CD4-positive, alpha-beta T cell (primary cell): ENCODE measurements at regions of chr3 and their contacts with region 1.

Region 1: GRCh38 chr3:140863580-140864009 is 78.0 kb upstream of the SLC25A36 start:
- DNase-seq: peak in 9 of 14 experiments; percentile 2 to 58 (median 7)
- ATAC-seq: no peak
- H3K4me3 ChIP-seq: no peak overlapping the region
- H3K4me3 Mint-ChIP-seq: no peak overlapping the region
- H3K27ac ChIP-seq: no peak overlapping the region
- H3K27ac Mint-ChIP-seq: no peak overlapping the region
- H3K4me1 ChIP-seq: peaks cover 3% of the 10 kb centered on the region
- H3K4me1 Mint-ChIP-seq: no peaks in the 10 kb centered on the region
- H3K27me3 ChIP-seq: no peaks in the 10 kb centered on the region
- H3K27me3 Mint-ChIP-seq: peaks cover 3% of the 10 kb centered on the region
- CTCF ChIP-seq: peak; percentile 48

Region 2: GRCh38 chr3:139111392-139112229 is 1752.0 kb before region 1 on chr3:
- CTCF ChIA-PET with region 1: no interaction called
- POLR2A ChIA-PET with region 1: no interaction called
- intact Hi-C with region 1: loop called in 1 of 2 experiments (anchors 10 kb)
- DNase-seq: peak; percentile 14 to 64 (median 42)
- ATAC-seq: peak; percentile 48
- H3K4me3 ChIP-seq: no peak overlapping the region
- H3K4me3 Mint-ChIP-seq: no peak overlapping the region
- H3K27ac ChIP-seq: no peak overlapping the region
- H3K27ac Mint-ChIP-seq: no peak overlapping the region
- H3K4me1 ChIP-seq: peaks cover 8% of the 10 kb centered on the region
- H3K4me1 Mint-ChIP-seq: peaks cover 7% of the 10 kb centered on the region
- H3K27me3 ChIP-seq: peaks cover 2 to 7% of the 10 kb centered on the region in 2 experiments
- H3K27me3 Mint-ChIP-seq: peaks cover 31% of the 10 kb centered on the region
- CTCF ChIP-seq: peak; percentile 53

Region 3: DNA sequence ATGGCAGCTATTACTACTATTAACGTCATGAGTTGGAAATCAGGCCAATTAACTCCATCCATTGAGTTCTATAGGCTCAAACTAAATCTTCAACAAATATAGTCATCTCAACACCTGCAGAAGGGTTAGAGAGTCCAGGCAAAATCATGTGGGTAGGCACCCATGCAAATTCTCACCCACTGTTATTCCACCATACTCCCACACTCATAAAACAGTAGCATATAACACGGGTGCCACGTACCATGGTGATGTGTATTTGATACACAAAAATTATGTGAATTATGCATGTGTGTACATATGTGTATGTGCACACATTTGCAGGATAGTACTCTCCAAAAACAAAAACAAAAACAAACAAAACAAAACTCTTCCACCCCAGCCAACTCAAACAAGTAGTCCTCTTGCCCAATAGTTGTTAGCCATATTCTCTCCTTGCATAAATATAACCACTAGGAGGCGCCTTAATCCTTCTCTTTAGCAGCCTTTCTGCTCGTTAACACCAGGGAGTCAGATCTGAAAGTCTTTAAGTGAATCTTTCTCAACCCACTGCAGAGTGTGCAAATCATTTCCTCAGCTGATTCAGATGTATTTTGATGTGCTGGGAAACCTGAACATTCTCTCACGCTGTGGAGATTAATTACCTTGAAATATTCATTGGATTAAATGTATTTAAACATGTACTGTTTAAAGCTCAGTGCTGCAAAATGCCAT is 1436.2 kb before region 1 on chr3:
- CTCF ChIA-PET with region 1: no interaction called
- POLR2A ChIA-PET with region 1: no interaction called
- intact Hi-C with region 1: loop called in 1 of 2 experiments (anchors 2 kb)
- DNase-seq: peak in 3 of 14 experiments; percentile 53 to 62 (median 61)
- ATAC-seq: no peak
- H3K4me3 ChIP-seq: no peak overlapping the region
- H3K4me3 Mint-ChIP-seq: no peak overlapping the region
- H3K27ac ChIP-seq: no peak overlapping the region
- H3K27ac Mint-ChIP-seq: no peak overlapping the region
- H3K4me1 ChIP-seq: no peaks in the 10 kb centered on the region
- H3K4me1 Mint-ChIP-seq: no peaks in the 10 kb centered on the region
- H3K27me3 ChIP-seq: no peaks in the 10 kb centered on the region
- H3K27me3 Mint-ChIP-seq: no peaks in the 10 kb centered on the region
- CTCF ChIP-seq: peak; percentile 80